ENCODE measurements at regions of chr17 and their contacts with region 1.

Region 1: GRCh38 chr17:6421700-6422604 is 13.0 kb downstream of the AIPL1 start:
- DNase-seq: peak; percentile 46 to 83 (median 65)
- ATAC-seq: peak; percentile 62
- H3K4me3 ChIP-seq: no peak overlapping the region
- H3K4me3 Mint-ChIP-seq: no peak overlapping the region
- H3K27ac ChIP-seq: no peak overlapping the region
- H3K27ac Mint-ChIP-seq: no peak overlapping the region
- H3K4me1 ChIP-seq: peaks cover 15% of the 10 kb centered on the region
- H3K4me1 Mint-ChIP-seq: peaks cover 2% of the 10 kb centered on the region
- H3K27me3 ChIP-seq: peaks cover 0 to 5% of the 10 kb centered on the region in 2 experiments
- H3K27me3 Mint-ChIP-seq: peaks cover 36% of the 10 kb centered on the region
- CTCF ChIP-seq: peak; percentile 81

Region 2: GRCh38 chr17:5446786-5447185 is 975.2 kb before region 1 on chr17:
- CTCF ChIA-PET with region 1: no interaction called
- POLR2A ChIA-PET with region 1: no interaction called
- intact Hi-C with region 1: loop called in 1 of 2 experiments (anchors 10 kb)
- DNase-seq: no peak
- ATAC-seq: no peak
- H3K4me3 ChIP-seq: no peak overlapping the region
- H3K4me3 Mint-ChIP-seq: no peak overlapping the region
- H3K27ac ChIP-seq: no peak overlapping the region
- H3K27ac Mint-ChIP-seq: no peak overlapping the region
- H3K4me1 ChIP-seq: no peaks in the 10 kb centered on the region
- H3K4me1 Mint-ChIP-seq: no peaks in the 10 kb centered on the region
- H3K27me3 ChIP-seq: no peaks in the 10 kb centered on the region
- H3K27me3 Mint-ChIP-seq: no peaks in the 10 kb centered on the region
- CTCF ChIP-seq: no peak

Region 3: DNA sequence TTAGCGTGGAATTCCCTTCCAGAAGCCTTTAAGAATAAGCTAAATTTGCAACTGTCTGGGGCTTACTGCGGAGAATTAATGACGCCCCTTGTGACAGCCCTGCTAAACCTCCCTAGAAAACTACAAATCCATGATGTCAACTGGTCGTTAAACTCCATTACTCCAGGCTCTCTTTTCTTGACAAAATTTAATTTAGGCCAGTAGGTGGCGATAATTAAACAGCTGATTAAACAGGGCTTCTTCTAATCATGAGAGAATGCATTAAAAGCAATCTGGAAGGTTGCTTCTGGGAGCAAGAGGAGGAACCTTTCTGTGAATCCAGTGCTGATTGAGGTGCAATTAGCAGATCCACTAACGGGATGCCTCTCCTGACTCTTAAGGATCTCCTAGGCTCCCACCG is 829.6 kb before region 1 on chr17:
- CTCF ChIA-PET with region 1: interaction called, 3 read pairs
- POLR2A ChIA-PET with region 1: no interaction called
- intact Hi-C with region 1: loop called (anchors 1 kb)
- DNase-seq: peak in 3 of 14 experiments; percentile 56 to 68 (median 61)
- ATAC-seq: peak; percentile 65
- H3K4me3 ChIP-seq: no peak overlapping the region
- H3K4me3 Mint-ChIP-seq: no peak overlapping the region
- H3K27ac ChIP-seq: no peak overlapping the region
- H3K27ac Mint-ChIP-seq: no peak overlapping the region
- H3K4me1 ChIP-seq: peaks cover 1% of the 10 kb centered on the region
- H3K4me1 Mint-ChIP-seq: peaks cover 3% of the 10 kb centered on the region
- H3K27me3 ChIP-seq: peaks cover 5% of the 10 kb centered on the region in 2 experiments
- H3K27me3 Mint-ChIP-seq: peaks cover 39% of the 10 kb centered on the region
- CTCF ChIP-seq: peak; percentile 81

Region 4: GRCh38 chr17:5986644-5987043 is 435.3 kb before region 1 on chr17:
- CTCF ChIA-PET with region 1: no interaction called
- POLR2A ChIA-PET with region 1: no interaction called
- intact Hi-C with region 1: no loop called
- DNase-seq: no peak
- ATAC-seq: no peak
- H3K4me3 ChIP-seq: no peak overlapping the region
- H3K4me3 Mint-ChIP-seq: no peak overlapping the region
- H3K27ac ChIP-seq: no peak overlapping the region
- H3K27ac Mint-ChIP-seq: no peak overlapping the region
- H3K4me1 ChIP-seq: no peaks in the 10 kb centered on the region
- H3K4me1 Mint-ChIP-seq: no peaks in the 10 kb centered on the region
- H3K27me3 ChIP-seq: no peaks in the 10 kb centered on the region
- H3K27me3 Mint-ChIP-seq: peaks cover 27% of the 10 kb centered on the region
- CTCF ChIP-seq: no peak

Region 5: DNA sequence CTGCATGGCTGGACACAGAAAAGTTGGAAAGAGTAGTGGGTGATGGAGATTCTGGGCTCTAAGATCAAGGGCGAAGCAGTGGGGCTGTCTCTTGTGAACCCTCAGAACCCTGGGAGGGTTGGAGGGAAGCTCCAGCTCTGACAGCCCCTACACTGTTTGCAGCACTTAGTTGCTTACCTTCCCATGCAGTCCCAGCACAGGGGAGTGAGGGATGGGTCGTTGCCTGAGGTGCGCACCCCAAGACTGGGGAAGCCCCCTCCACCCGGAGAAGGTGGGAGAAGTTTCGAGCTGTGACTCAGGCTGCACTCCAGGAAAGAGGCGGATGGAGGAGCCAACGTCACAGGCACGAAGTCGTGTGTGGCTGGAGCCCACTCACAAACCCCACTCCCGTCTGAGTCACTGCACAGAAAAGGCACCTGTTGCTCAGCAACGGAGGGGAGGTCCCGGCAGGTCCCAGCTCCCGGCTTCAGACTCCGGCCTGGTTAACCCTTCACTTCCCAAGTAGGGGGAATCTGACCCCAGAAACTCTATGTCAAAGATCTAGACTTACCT is 47.1 kb before region 1 on chr17:
- CTCF ChIA-PET with region 1: no interaction called
- POLR2A ChIA-PET with region 1: no interaction called
- intact Hi-C with region 1: no loop called
- DNase-seq: no peak
- ATAC-seq: no peak
- H3K4me3 ChIP-seq: no peak overlapping the region
- H3K4me3 Mint-ChIP-seq: no peak overlapping the region
- H3K27ac ChIP-seq: no peak overlapping the region
- H3K27ac Mint-ChIP-seq: no peak overlapping the region
- H3K4me1 ChIP-seq: no peaks in the 10 kb centered on the region
- H3K4me1 Mint-ChIP-seq: no peaks in the 10 kb centered on the region
- H3K27me3 ChIP-seq: peaks cover 3 to 8% of the 10 kb centered on the region in 2 experiments
- H3K27me3 Mint-ChIP-seq: peaks cover 38% of the 10 kb centered on the region
- CTCF ChIP-seq: no peak

Region 6: GRCh38 chr17:6461792-6462524 is 40.0 kb after region 1 on chr17:
- CTCF ChIA-PET with region 1: no interaction called
- POLR2A ChIA-PET with region 1: no interaction called
- intact Hi-C with region 1: no loop called
- DNase-seq: no peak
- ATAC-seq: no peak
- H3K4me3 ChIP-seq: no peak overlapping the region
- H3K4me3 Mint-ChIP-seq: no peak overlapping the region
- H3K27ac ChIP-seq: no peak overlapping the region
- H3K27ac Mint-ChIP-seq: no peak overlapping the region
- H3K4me1 ChIP-seq: no peaks in the 10 kb centered on the region
- H3K4me1 Mint-ChIP-seq: no peaks in the 10 kb centered on the region
- H3K27me3 ChIP-seq: no peaks in the 10 kb centered on the region
- H3K27me3 Mint-ChIP-seq: no peaks in the 10 kb centered on the region
- CTCF ChIP-seq: no peak

Region 7: GRCh38 chr17:6651357-6651918 is 229.5 kb after region 1 on chr17 and contains the starts of genes C17orf100 and MED31:
- CTCF ChIA-PET with region 1: no interaction called
- POLR2A ChIA-PET with region 1: no interaction called
- intact Hi-C with region 1: no loop called
- DNase-seq: peak; percentile 87 to 98 (median 94)
- ATAC-seq: peak; percentile 81
- H3K4me3 ChIP-seq: peak within 1 kb of the TSS; percentile 64
- H3K4me3 Mint-ChIP-seq: peak within 1 kb of the TSS; percentile 99
- H3K27ac ChIP-seq: peak within 1 kb of the TSS; percentile 98
- H3K27ac Mint-ChIP-seq: peak within 1 kb of the TSS; percentile 99
- H3K4me1 ChIP-seq: peaks cover 35% of the 10 kb centered on the region
- H3K4me1 Mint-ChIP-seq: peaks cover 73% of the 10 kb centered on the region
- H3K27me3 ChIP-seq: peaks cover 0 to 4% of the 10 kb centered on the region in 2 experiments
- H3K27me3 Mint-ChIP-seq: no peaks in the 10 kb centered on the region
- CTCF ChIP-seq: no peak
- total RNA-seq, gene C17orf100: 0.69 to 0.70 TPM
- total RNA-seq, gene MED31: 31.4 to 32.0 TPM